ENCODE measurements at regions of chr1 and their contacts with region 1.

Region 1: DNA sequence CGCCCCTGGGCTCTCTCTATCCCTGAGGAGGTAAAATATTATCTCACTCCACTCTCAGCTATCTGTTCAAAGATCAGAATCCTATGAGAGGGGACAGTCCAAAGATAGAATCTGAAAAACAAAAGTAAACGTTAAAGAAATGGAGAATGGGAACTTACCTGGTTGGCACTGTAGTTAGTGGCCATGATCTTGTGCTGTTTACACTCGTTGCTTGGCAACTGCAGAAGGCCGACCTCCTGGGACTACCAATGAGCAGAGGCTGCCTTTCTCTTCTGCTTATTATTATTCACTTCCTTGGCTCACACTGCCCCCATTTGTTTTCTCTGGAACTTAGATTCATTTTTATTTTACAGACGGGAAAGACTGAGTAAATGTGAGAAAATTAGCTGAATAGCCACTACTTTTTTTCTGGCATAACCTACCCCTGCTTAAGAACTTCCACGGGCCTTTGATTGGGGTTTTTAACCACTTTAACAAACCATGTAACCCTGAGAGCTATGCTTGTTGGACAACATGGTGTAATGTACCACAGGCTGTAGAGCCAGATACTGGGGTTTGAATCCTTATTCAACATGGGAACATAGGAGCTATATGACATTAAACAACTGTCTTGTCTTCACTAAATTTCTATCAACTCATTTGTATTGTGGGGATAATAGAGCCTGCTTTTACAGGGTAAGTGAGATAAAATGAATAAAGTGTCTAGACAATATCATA is at the start of gene CFAP126:
- DNase-seq: no peak
- H3K4me3 ChIP-seq: no peak within 1 kb of the TSS
- H3K27ac ChIP-seq: peak within 1 kb of the TSS; percentile 5 to 64 (median 50)
- H3K4me1 ChIP-seq: peaks cover 5 to 9% (median 9%) of the 10 kb centered on the region in 4 donors
- H3K27me3 ChIP-seq: no peaks in the 10 kb centered on the region
- CTCF ChIP-seq: peak; percentile 19 to 33 (median 27)
- EP300 ChIP-seq: no peak
- POLR2A ChIP-seq: no peak
- total RNA-seq, gene CFAP126: not detected

Region 2: DNA sequence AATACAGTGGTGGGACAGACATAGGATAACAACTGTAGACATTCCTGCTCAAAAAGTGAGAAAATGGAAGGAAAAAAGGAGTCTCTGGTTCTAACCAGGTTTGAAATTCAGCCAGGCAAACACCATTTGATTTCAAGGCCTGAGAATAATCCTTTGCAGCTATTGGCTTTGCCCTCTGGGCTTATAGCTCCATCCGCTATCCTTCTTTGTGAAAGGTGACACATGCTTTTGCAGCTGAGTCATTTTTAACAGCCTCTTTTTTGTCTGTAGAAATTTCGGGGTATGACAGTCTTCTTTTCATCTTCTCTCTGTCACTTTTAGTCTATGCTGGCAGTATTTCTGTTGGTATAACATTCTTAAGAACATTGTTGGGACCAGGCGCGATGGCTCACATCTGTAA is 37.5 kb before region 1 on chr1:
- intact Hi-C with region 1: loop called (anchors 5 kb)
- DNase-seq: no peak
- H3K4me3 ChIP-seq: no peak overlapping the region
- H3K27ac ChIP-seq: no peak overlapping the region
- H3K4me1 ChIP-seq: no peaks in the 10 kb centered on the region
- H3K27me3 ChIP-seq: no peaks in the 10 kb centered on the region
- CTCF ChIP-seq: no peak
- EP300 ChIP-seq: no peak
- POLR2A ChIP-seq: no peak

Measured in esophagus muscularis mucosa (tissue), 4 donors.